Dendritic cell treated with granulocyte-macrophage colony-stimulating factor and Interleukin-4, amounts not matched to agents 40 ng/mL and 50 ng/mL, for 4 days (primary cell): ENCODE measurements at regions of chr5 and their contacts with region 1.

Region 1: DNA sequence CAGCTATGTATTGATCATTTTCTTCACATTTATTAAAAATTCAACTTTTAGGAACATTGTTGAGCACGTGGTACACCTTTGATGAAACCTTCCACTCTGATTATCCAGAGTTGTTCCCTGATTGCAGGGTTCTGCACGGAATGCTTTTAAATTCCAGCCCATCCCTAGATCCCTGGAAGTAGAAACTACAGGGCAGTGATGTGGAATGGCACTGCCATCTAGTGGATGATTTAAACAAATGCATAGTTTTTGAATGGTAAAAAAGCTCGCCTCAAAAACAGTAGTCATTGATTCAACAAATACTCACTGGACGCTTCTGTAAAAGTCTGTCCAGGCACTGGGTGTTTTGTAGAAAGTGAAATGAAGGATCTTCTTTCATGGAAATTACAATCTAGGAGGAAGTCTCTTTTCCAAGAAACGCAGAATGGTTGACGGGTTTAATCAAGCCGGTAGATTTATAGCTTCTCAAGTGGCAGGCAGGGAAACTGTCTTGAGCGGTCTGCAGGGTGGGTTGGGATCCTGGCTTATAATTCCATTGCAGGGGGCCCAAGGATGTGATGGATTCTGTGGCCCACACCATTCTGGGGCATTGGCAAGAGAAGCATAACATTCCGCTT is 118.4 kb downstream of the ARHGAP26 start:
- H3K4me3 Mint-ChIP-seq: no peak overlapping the region
- H3K27ac Mint-ChIP-seq: no peak overlapping the region
- H3K4me1 Mint-ChIP-seq: peaks cover 28% of the 10 kb centered on the region
- H3K27me3 Mint-ChIP-seq: no peaks in the 10 kb centered on the region

Region 2: GRCh38 chr5:141547488-141547887 is 1341.1 kb before region 1 on chr5:
- intact Hi-C with region 1: no loop called
- H3K4me3 Mint-ChIP-seq: no peak overlapping the region
- H3K27ac Mint-ChIP-seq: no peak overlapping the region
- H3K4me1 Mint-ChIP-seq: peaks cover 12% of the 10 kb centered on the region
- H3K27me3 Mint-ChIP-seq: no peaks in the 10 kb centered on the region

Region 3: DNA sequence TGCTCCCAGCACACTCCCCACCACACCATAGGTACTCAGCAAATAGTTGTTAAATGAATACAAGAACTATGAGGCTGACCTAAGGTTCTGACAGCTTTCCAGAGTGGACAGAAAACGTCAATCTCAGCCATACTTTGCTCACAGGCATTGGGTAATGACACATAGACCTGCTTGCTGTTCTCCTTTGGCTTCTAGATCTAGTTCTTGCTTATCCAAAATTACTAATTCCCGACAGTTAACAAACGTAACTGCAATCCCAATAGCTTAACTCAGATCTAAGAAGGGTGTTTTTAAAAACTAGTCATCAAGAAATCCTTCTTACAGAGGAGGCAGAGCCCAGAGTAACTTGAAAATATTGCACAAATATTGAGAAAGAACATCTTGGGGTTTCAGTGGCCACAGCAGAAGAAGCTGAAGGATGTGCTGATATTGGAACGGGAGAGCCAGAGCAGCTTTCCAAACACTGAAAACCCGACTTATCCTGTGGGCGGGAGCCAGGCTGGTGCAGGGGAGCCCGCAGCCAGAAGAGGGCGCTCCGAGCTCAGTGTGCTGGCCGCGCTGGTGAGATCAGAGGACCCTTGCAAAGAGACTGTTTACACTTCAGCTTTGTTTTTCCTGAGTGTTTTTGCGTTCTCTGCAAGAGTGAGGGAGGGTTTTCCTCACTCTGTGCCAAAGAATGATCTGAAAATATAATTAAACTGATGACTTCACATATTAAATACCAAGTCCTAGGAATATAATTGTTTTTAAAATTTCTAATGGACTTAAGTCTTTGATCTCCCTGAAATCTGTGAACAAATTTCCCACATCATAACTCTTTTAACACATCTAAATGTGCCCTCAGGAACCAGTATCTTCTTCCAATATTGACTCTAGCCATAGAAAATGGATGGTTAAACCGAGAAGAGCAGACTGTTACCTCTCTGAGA is 233.0 kb before region 1 on chr5:
- intact Hi-C with region 1: loop called (anchors 5 kb)
- H3K4me3 Mint-ChIP-seq: no peak overlapping the region
- H3K27ac Mint-ChIP-seq: no peak overlapping the region
- H3K4me1 Mint-ChIP-seq: no peaks in the 10 kb centered on the region
- H3K27me3 Mint-ChIP-seq: peaks cover 24% of the 10 kb centered on the region

Region 4: GRCh38 chr5:142713121-142713706 is 175.4 kb before region 1 on chr5:
- intact Hi-C with region 1: loop called (anchors 1 kb)
- H3K4me3 Mint-ChIP-seq: peak overlapping the region; percentile 82
- H3K27ac Mint-ChIP-seq: peak overlapping the region; percentile 81
- H3K4me1 Mint-ChIP-seq: peaks cover 30% of the 10 kb centered on the region
- H3K27me3 Mint-ChIP-seq: peaks cover 3% of the 10 kb centered on the region

Region 5: GRCh38 chr5:142857405-142857804 is 31.2 kb before region 1 on chr5:
- intact Hi-C with region 1: no loop called
- H3K4me3 Mint-ChIP-seq: no peak overlapping the region
- H3K27ac Mint-ChIP-seq: peak overlapping the region; percentile 42
- H3K4me1 Mint-ChIP-seq: peaks cover 89% of the 10 kb centered on the region
- H3K27me3 Mint-ChIP-seq: no peaks in the 10 kb centered on the region